ENCODE measurements at regions of chr15 and their contacts with region 1.

Region 1: GRCh38 chr15:98518823-98519561 is 129.3 kb upstream of the IGF1R start:
- DNase-seq: peak; percentile 67
- ATAC-seq: peak; percentile 82
- H3K4me3 ChIP-seq: no peak overlapping the region
- H3K27ac ChIP-seq: no peak overlapping the region
- H3K4me1 ChIP-seq: peaks cover 32% of the 10 kb centered on the region
- H3K27me3 ChIP-seq: peaks cover 0 to 20% of the 10 kb centered on the region in 2 experiments; a peak in 3 of 5 replicates
- CTCF ChIP-seq: peak; percentile 88
- EP300 ChIP-seq: no peak
- POLR2A ChIP-seq: no peak
- RAD21 ChIP-seq: peak; percentile 73

Region 2: DNA sequence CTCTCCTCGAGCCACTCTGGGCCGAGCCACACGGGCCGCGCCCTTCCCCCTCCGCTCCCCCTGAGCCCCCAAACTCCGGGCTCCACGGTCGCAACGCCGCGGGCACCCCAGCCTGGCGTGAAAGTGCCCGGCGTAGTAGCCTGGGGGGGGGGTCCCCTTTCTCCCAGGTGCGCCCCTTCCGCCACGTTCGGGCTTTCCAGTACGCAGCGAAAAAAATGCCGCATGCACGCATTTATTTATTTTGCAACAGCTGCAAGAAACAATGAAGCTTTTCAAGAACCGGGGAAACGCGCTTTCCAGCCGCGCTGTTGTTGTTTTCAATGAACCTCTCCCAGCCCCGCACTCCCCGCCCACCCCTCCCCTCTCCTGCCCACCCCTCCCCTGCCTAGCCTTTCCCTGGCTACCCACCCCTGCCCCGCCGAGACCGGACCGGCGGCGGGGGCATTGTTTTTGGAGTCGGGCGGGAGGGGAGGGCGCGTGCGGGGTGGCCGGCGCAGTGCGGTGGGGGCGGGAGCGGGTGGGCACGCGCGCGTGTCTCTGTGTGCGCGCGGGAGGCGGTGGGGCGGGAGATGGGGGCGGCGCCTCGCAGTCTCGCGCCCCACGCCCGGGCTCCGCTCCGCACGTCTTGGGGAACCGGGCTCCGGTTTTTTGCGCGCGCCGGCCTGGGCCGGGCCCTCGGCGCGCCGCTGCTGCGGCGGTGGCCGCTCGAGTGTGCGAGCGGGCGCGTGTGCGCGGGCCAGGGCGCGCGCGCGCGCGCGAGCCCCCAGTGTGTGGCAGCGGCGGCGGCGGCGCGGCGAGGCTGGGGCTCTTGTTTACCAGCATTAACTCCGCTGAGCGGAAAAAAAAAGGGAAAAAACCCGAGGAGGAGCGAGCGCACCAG is 129.0 kb after region 1 on chr15 and contains the start of gene IGF1R:
- CTCF ChIA-PET with region 1: interaction called, 6 read pairs
- POLR2A ChIA-PET with region 1: interaction called, 5 read pairs
- in situ Hi-C with region 1: no loop called
- intact Hi-C with region 1: loop called (anchors 2 kb)
- DNase-seq: peak; percentile 80
- ATAC-seq: peak; percentile 20
- H3K4me3 ChIP-seq: peak within 1 kb of the TSS; percentile 83 to 94 (median 91)
- H3K27ac ChIP-seq: peak within 1 kb of the TSS; percentile 85
- H3K4me1 ChIP-seq: peaks cover 22% of the 10 kb centered on the region
- H3K27me3 ChIP-seq: peaks cover 1 to 24% of the 10 kb centered on the region in 2 experiments
- CTCF ChIP-seq: no peak
- EP300 ChIP-seq: no peak
- POLR2A ChIP-seq: no peak; a peak in 1 of 4 replicates
- RAD21 ChIP-seq: peak; percentile 46; the same call in 1 of the 2 replicates
- total RNA-seq, gene IGF1R: 12.0 and 15.9 TPM in 2 replicates

Region 3: GRCh38 chr15:98658831-98659699 is 140.1 kb after region 1 on chr15:
- CTCF ChIA-PET with region 1: interaction called, 12 read pairs
- POLR2A ChIA-PET with region 1: no interaction called
- in situ Hi-C with region 1: loop called (anchors 5 kb)
- intact Hi-C with region 1: loop called (anchors 1 kb)
- DNase-seq: peak; percentile 66
- ATAC-seq: peak; percentile 64
- H3K4me3 ChIP-seq: no peak overlapping the region
- H3K27ac ChIP-seq: no peak overlapping the region
- H3K4me1 ChIP-seq: peaks cover 99% of the 10 kb centered on the region
- H3K27me3 ChIP-seq: no peaks in the 10 kb centered on the region
- CTCF ChIP-seq: peak; percentile 89
- EP300 ChIP-seq: no peak
- POLR2A ChIP-seq: no peak
- RAD21 ChIP-seq: peak; percentile 60

Region 4: GRCh38 chr15:98904544-98904943 is 385.6 kb after region 1 on chr15:
- CTCF ChIA-PET with region 1: no interaction called
- POLR2A ChIA-PET with region 1: no interaction called
- in situ Hi-C with region 1: no loop called
- intact Hi-C with region 1: loop called (anchors 2 kb)
- DNase-seq: peak; percentile 41
- ATAC-seq: peak; percentile 76
- H3K4me3 ChIP-seq: no peak overlapping the region
- H3K27ac ChIP-seq: no peak overlapping the region
- H3K4me1 ChIP-seq: peaks cover 23% of the 10 kb centered on the region; the same call in 1 of the 2 replicates
- H3K27me3 ChIP-seq: no peaks in the 10 kb centered on the region
- CTCF ChIP-seq: peak; percentile 73
- EP300 ChIP-seq: no peak
- POLR2A ChIP-seq: no peak
- RAD21 ChIP-seq: 0 out of 2 replicates have a peak, but pooled peaks have one; percentile 17

Region 5: DNA sequence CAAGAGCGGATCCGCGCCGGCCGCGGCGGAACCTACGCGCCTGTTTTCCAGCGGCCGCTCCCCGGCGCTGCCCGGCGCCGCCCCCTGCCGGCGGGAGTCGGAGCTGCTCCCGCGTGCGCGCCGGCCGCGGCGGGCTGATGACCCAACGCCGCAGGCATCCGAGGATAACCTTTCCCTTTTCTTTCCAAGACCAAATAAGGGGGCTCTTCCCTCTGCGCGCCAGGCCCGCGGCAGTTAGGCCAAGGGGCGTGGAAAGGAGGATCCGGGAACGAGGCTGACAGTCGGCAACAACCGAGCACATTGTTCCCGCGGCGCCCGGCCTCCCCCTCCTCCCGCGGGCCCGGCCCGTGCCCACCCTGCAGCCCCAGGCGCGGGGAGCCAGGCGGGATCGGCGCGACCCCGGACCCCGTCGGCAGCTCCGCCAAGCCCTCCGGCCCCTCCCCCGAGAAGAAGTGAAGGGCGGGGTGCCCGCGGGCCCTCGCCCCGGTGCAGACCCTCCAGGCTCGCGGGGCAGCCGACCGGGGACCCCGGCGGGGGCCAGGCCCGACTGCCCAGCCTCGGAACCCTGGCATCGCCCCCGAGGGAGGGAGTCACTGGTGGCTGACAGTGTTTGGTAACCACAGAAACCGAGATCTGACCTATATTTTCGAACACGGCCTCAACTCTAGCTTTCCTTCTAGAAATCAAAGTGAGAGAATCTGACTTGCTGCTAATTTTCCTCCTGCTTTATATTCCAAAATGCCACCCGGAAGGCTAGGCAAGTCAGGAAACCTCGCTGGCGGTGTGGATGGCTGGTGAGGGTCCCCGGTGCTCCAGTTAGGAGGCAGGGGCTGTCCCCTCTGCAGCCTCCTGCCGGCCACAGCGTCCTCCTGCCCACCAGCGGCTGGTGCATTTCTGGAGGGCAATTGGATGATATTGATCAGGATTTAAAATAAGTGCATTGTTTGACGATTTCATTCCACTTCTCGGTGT is 540.3 kb after region 1 on chr15:
- CTCF ChIA-PET with region 1: no interaction called
- POLR2A ChIA-PET with region 1: no interaction called
- in situ Hi-C with region 1: loop called (anchors 5 kb)
- intact Hi-C with region 1: no loop called
- DNase-seq: peak; percentile 65
- ATAC-seq: peak; percentile 86
- H3K4me3 ChIP-seq: peak overlapping the region; percentile 49 to 69 (median 53)
- H3K27ac ChIP-seq: no peak overlapping the region
- H3K4me1 ChIP-seq: peaks cover 23% of the 10 kb centered on the region; the same call in 1 of the 2 replicates
- H3K27me3 ChIP-seq: peaks cover 11 to 67% of the 10 kb centered on the region in 2 experiments; a peak in 4 of 5 replicates
- CTCF ChIP-seq: peak; percentile 66
- EP300 ChIP-seq: no peak
- POLR2A ChIP-seq: no peak
- RAD21 ChIP-seq: peak; percentile 65

Region 6: GRCh38 chr15:99076552-99077308 is 557.7 kb after region 1 on chr15:
- CTCF ChIA-PET with region 1: interaction called, 3 read pairs
- POLR2A ChIA-PET with region 1: no interaction called
- in situ Hi-C with region 1: no loop called
- intact Hi-C with region 1: loop called (anchors 1 kb)
- DNase-seq: peak; percentile 67
- ATAC-seq: peak; percentile 86
- H3K4me3 ChIP-seq: peak overlapping the region in 2 of 3 experiments; percentile 27 to 31; a peak in 3 of 6 replicates
- H3K27ac ChIP-seq: no peak overlapping the region
- H3K4me1 ChIP-seq: peaks cover 9% of the 10 kb centered on the region
- H3K27me3 ChIP-seq: peaks cover 0 to 7% of the 10 kb centered on the region in 2 experiments; a peak in 2 of 5 replicates
- CTCF ChIP-seq: peak; percentile 91
- EP300 ChIP-seq: no peak
- POLR2A ChIP-seq: no peak
- RAD21 ChIP-seq: peak; percentile 77